ENCODE measurements at regions of chr3 and their contacts with region 1.

Region 1: GRCh38 chr3:184711493-184712247 is at the start of gene MAGEF1:
- DNase-seq: peak; percentile 85 to 86
- ATAC-seq: peak; percentile 92 to 98 (median 94)
- H3K4me3 ChIP-seq: peak within 1 kb of the TSS; percentile 66 to 97 (median 86)
- H3K27ac ChIP-seq: peak within 1 kb of the TSS; percentile 85 to 98 (median 94)
- H3K4me1 ChIP-seq: peaks cover 5 to 59% (median 31%) of the 10 kb centered on the region in 9 donors
- H3K27me3 ChIP-seq: no peaks in the 10 kb centered on the region
- CTCF ChIP-seq: no peak
- total RNA-seq, gene MAGEF1: 26.7 to 33.9 (median 30.5) TPM

Region 2: GRCh38 chr3:184543843-184544512 is 167.7 kb before region 1 on chr3:
- intact Hi-C with region 1: no loop called
- DNase-seq: peak in 1 of 2 donors; percentile 81
- ATAC-seq: peak; percentile 61 to 77 (median 72)
- H3K4me3 ChIP-seq: no peak overlapping the region
- H3K27ac ChIP-seq: no peak overlapping the region
- H3K4me1 ChIP-seq: peaks cover 0 to 12% (median 3%) of the 10 kb centered on the region in 9 donors
- H3K27me3 ChIP-seq: peaks cover 0 to 45% (median 35%) of the 10 kb centered on the region in 7 donors
- CTCF ChIP-seq: peak; percentile 85 to 97 (median 92)

Region 3: DNA sequence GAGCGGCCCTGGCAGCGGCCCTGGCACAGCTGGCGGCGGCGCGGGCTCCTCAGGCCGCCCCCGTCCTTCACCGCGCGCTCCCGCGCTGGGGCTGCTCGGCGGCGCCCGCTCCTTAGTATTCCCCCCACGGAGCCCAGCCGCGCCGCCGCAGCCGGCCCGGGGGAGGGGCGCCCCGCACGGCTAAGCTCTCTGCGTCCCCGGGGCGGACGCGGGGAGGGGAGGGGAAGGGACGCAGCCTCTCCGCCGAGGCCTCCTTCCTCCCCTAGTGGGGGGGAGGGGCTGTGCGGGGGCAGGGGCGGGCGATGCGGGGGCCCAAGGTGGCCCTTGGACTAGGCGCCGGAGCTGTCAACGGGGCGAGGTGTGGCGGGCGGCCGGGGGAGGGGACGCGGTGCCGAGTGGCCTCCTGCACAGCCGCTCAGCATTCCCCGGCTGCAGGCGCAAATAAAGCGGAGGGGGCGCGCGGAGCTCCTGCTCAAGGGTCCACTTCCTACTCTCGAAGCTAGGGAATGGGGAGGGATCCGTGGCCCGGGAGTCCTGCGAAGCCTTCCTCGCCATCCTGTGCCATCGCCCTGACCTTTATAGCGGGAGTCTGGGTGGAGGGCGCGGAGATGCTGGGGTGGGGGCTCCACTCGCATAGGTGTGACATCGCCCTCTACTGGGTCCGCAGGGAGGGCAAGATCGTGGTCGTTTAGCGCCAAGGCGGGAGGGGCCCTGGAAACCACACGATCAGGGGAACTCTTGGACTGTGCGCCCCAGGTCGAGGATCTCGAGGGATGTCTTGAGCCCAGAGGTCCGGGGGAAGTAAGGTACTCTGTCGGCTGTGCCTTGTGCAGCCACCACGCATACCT is 127.9 kb before region 1 on chr3:
- intact Hi-C with region 1: loop called in 2 of 10 experiments (anchors 5 kb)
- DNase-seq: peak in 1 of 2 donors; percentile 77
- ATAC-seq: peak; percentile 66 to 81 (median 74)
- H3K4me3 ChIP-seq: peak overlapping the region; percentile 4 to 75 (median 62)
- H3K27ac ChIP-seq: peak overlapping the region; percentile 63 to 91 (median 84)
- H3K4me1 ChIP-seq: peaks cover 0 to 42% (median 26%) of the 10 kb centered on the region in 9 donors
- H3K27me3 ChIP-seq: peaks cover 0 to 26% (median 0%) of the 10 kb centered on the region in 7 donors
- CTCF ChIP-seq: peak in 6 of 9 donors; percentile 12 to 46 (median 30)

Region 4: GRCh38 chr3:185176750-185177359 is 465.2 kb after region 1 on chr3:
- intact Hi-C with region 1: no loop called
- DNase-seq: peak in 1 of 2 donors; percentile 24
- ATAC-seq: peak in 2 of 8 donors; percentile 22 to 50
- H3K4me3 ChIP-seq: no peak overlapping the region
- H3K27ac ChIP-seq: no peak overlapping the region
- H3K4me1 ChIP-seq: peaks cover 0 to 20% (median 8%) of the 10 kb centered on the region in 9 donors
- H3K27me3 ChIP-seq: peaks cover 0 to 22% (median 5%) of the 10 kb centered on the region in 7 donors
- CTCF ChIP-seq: peak; percentile 46 to 83 (median 75)